ENCODE measurements at regions of chr12 and their contacts with region 1.

Region 1: DNA sequence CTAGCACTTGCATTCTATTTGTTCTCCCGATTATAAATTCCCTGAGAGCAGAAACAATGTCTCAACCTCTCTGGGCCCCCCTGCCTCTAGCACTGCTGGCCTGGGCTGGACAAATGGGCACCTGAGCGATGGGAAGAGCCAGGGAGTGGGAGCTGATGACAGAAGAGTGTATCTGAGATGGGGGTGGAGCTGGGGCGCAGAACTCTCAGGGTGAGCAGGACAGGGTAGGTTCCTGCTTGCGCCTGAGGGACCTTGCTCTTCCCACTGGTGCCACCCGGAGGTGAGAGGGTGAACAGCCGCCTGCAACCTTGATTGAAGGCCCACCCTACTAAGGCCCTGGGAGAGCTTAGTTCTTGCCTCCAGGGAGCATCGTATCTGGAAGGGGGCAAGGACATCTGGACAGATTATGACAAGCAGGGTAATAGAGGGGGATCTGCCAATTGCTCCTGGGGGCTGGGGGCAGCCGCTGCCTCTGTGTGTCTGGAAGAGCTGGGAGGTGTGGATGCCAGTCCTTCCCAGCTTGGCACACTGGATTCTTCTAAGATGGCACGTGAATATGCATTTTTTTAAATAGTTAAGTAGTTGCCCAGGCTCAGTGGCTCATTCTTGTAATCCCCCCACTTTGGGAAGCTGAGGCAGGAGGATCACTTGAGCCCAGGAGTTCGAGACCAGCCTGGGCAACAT is 43.0 kb upstream of the TSPAN9 start:
- DNase-seq: peak; percentile 62
- H3K4me3 ChIP-seq: no peak overlapping the region
- H3K27ac ChIP-seq: no peak overlapping the region
- H3K4me1 ChIP-seq: no peaks in the 10 kb centered on the region
- CTCF ChIP-seq: peak; percentile 77

Region 2: DNA sequence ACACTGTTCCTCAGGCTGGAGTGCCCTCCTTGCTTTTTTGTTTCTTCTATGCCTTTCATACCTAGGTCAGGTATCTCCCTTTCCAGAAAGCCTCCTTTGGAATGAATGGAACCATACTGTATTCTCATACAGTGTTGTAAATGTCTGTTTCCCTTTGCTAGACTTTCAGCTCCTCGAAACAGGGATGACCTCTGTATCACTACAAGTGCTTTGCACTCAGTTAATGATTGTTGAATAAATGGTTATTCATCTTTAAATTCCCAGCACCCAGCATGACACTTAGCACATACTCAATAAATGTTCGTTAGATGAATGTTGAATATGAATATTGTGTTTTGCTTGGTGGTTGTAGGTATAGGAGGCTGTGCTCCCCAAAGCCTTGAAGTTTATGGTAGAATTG is 149.4 kb before region 1 on chr12:
- CTCF ChIA-PET with region 1: no interaction called
- POLR2A ChIA-PET with region 1: no interaction called
- intact Hi-C with region 1: loop called (anchors 2 kb)
- DNase-seq: no peak
- H3K4me3 ChIP-seq: no peak overlapping the region
- H3K27ac ChIP-seq: no peak overlapping the region
- H3K4me1 ChIP-seq: no peaks in the 10 kb centered on the region
- CTCF ChIP-seq: no peak